ENCODE measurements at regions of chr5 and their contacts with region 1.

Region 1: DNA sequence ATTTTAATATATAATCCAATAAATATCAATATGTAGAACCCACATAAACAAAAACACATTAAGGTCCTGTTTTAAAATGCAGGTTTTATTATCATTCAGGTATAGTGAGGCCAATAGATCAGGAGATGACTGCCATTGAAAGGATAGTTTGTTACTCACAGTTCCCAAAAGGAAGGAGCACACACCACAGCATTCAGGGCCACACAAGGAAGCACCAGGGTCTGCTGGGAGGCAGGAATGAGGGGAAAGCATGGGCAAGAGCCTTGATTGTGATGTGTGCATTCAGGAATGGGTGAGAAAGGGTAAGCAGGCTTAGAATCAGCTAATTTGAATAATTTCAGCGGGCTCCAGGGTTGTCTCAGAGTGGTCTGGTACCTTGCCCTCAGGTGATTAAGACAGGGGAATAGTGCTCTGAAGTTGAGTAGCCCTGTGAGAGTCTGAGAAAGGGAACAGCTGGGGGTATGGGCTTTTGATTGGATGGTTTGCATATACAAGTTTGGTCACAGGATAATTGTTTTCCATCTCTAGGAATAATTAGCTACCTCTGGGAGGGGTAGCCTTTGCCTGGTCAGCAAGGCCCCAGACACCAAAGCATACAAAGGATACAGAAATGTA is 19.8 kb upstream of the OTULIN start:
- DNase-seq: no peak
- ATAC-seq: no peak
- H3K4me3 ChIP-seq: no peak overlapping the region
- H3K27ac ChIP-seq: no peak overlapping the region
- H3K4me1 ChIP-seq: no peaks in the 10 kb centered on the region
- H3K27me3 ChIP-seq: no peaks in the 10 kb centered on the region
- CTCF ChIP-seq: no peak
- EP300 ChIP-seq: no peak
- POLR2A ChIP-seq: no peak
- RAD21 ChIP-seq: no peak

Region 2: GRCh38 chr5:14364576-14365472 is 279.9 kb before region 1 on chr5:
- CTCF ChIA-PET with region 1: interaction called, 15 read pairs
- POLR2A ChIA-PET with region 1: no interaction called
- RAD21 ChIA-PET with region 1: interaction called, 5 read pairs
- SMC1A ChIA-PET with region 1: interaction called, 4 read pairs
- in situ Hi-C with region 1: no loop called
- intact Hi-C with region 1: no loop called
- DNase-seq: no peak
- ATAC-seq: peak; percentile 49; the same call in 2 of the 3 replicates
- H3K4me3 ChIP-seq: no peak overlapping the region
- H3K27ac ChIP-seq: no peak overlapping the region
- H3K4me1 ChIP-seq: no peaks in the 10 kb centered on the region
- H3K27me3 ChIP-seq: no peaks in the 10 kb centered on the region
- CTCF ChIP-seq: peak; percentile 40 to 70 (median 46)
- EP300 ChIP-seq: no peak
- POLR2A ChIP-seq: no peak
- RAD21 ChIP-seq: peak; percentile 38

Region 3: DNA sequence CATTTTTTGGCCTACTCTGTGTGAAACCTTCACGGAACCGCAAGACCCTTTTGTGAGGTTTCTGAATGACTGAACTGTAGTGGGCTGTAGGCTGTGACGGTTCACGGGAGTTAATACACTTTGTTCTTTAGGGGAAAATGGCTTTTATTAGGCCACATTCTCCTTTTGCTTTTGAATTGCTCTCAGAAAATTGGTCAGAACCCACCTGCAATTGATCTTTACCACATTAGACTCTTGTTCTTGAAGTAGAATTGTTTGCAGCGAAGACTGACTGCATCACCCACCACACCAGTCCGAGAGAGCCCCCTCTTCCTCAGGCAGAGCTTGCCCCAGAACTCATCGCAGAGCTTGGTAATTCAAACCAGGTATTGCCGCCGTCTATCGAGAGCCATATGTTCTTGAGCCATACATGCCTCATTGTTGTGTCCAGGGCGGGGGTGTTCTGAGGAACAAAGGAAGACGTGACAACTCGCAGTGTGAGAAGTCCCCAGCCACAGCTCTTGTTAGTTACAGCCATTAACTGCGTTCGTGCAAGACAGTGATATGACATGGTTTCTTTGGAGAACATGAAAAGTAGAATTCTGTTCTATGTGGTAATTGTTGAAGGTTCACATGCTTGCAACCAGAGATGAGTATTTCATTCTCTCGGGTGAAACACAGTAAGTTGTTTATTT is 229.6 kb before region 1 on chr5:
- CTCF ChIA-PET with region 1: interaction called, 7 read pairs
- POLR2A ChIA-PET with region 1: no interaction called
- RAD21 ChIA-PET with region 1: interaction called, 4 read pairs
- SMC1A ChIA-PET with region 1: interaction called, 14 read pairs
- in situ Hi-C with region 1: no loop called
- intact Hi-C with region 1: no loop called
- DNase-seq: peak; percentile 53
- ATAC-seq: peak; percentile 86
- H3K4me3 ChIP-seq: peak overlapping the region; percentile 32; the same call in 1 of the 2 replicates
- H3K27ac ChIP-seq: peak overlapping the region; percentile 91
- H3K4me1 ChIP-seq: peaks cover 41% of the 10 kb centered on the region
- H3K27me3 ChIP-seq: no peaks in the 10 kb centered on the region
- CTCF ChIP-seq: no peak
- EP300 ChIP-seq: peak; percentile 34 to 64; a peak in 3 of 4 replicates
- POLR2A ChIP-seq: peak; percentile 42; the same call in 1 of the 2 replicates
- RAD21 ChIP-seq: peak; percentile 13; the same call in 1 of the 2 replicates

Region 4: GRCh38 chr5:14656898-14657297 is 12.2 kb after region 1 on chr5:
- CTCF ChIA-PET with region 1: interaction called, 23 read pairs
- POLR2A ChIA-PET with region 1: interaction called, 3 read pairs
- RAD21 ChIA-PET with region 1: interaction called, 14 read pairs
- SMC1A ChIA-PET with region 1: interaction called, 29 read pairs
- in situ Hi-C with region 1: no loop called
- intact Hi-C with region 1: no loop called
- DNase-seq: no peak
- ATAC-seq: no peak
- H3K4me3 ChIP-seq: no peak overlapping the region
- H3K27ac ChIP-seq: no peak overlapping the region
- H3K4me1 ChIP-seq: 0 out of 2 replicates have a peak, but pooled peaks cover 3% of the 10 kb centered on the region
- H3K27me3 ChIP-seq: no peaks in the 10 kb centered on the region
- CTCF ChIP-seq: no peak
- EP300 ChIP-seq: no peak
- POLR2A ChIP-seq: no peak
- RAD21 ChIP-seq: no peak

Region 5: DNA sequence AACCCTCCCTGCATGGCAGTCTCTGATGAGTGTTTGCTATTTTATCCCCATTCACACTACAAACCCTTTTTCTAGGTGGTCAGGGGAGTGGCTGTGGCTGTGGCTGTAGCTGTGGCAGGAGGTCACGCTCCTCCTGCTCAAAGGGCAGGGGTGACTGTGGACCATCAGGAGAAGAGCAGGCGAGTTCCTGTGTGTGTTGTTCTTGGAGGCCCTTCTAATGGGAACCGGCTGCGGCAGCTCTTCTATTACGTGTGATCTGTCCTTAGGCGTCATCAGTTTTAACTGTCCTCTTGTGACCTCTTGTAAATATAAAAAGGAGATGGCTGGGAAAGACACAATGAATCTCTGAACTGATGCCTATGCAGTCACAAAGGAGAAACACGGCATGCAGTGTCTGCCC is 161.7 kb after region 1 on chr5:
- CTCF ChIA-PET with region 1: no interaction called
- POLR2A ChIA-PET with region 1: no interaction called
- RAD21 ChIA-PET with region 1: no interaction called
- SMC1A ChIA-PET with region 1: no interaction called
- in situ Hi-C with region 1: no loop called
- intact Hi-C with region 1: no loop called
- DNase-seq: no peak
- ATAC-seq: no peak
- H3K4me3 ChIP-seq: no peak overlapping the region
- H3K27ac ChIP-seq: no peak overlapping the region
- H3K4me1 ChIP-seq: peaks cover 15% of the 10 kb centered on the region
- H3K27me3 ChIP-seq: no peaks in the 10 kb centered on the region
- CTCF ChIP-seq: no peak
- EP300 ChIP-seq: no peak
- POLR2A ChIP-seq: no peak
- RAD21 ChIP-seq: no peak

Region 6: GRCh38 chr5:15304914-15305834 is 660.4 kb after region 1 on chr5:
- CTCF ChIA-PET with region 1: no interaction called
- POLR2A ChIA-PET with region 1: no interaction called
- RAD21 ChIA-PET with region 1: no interaction called
- SMC1A ChIA-PET with region 1: no interaction called
- in situ Hi-C with region 1: no loop called
- intact Hi-C with region 1: no loop called
- DNase-seq: no peak
- ATAC-seq: no peak
- H3K4me3 ChIP-seq: no peak overlapping the region
- H3K27ac ChIP-seq: no peak overlapping the region
- H3K4me1 ChIP-seq: no peaks in the 10 kb centered on the region
- H3K27me3 ChIP-seq: no peaks in the 10 kb centered on the region
- CTCF ChIP-seq: no peak
- EP300 ChIP-seq: no peak
- POLR2A ChIP-seq: no peak
- RAD21 ChIP-seq: no peak